AG04449 (cell line): ENCODE measurements at regions of chr10 and their contacts with region 1.

Region 1: GRCh38 chr10:11036407-11037011 is 18.8 kb downstream of the CELF2 start:
- DNase-seq: no peak
- H3K4me3 ChIP-seq: no peak overlapping the region
- CTCF ChIP-seq: peak; percentile 54

Region 2: GRCh38 chr10:9608602-9609001 is 1427.9 kb before region 1 on chr10:
- CTCF ChIA-PET with region 1: interaction called, 37 read pairs
- POLR2A ChIA-PET with region 1: no interaction called
- DNase-seq: no peak
- H3K4me3 ChIP-seq: no peak overlapping the region
- CTCF ChIP-seq: no peak

Region 3: GRCh38 chr10:11113156-11113555 is 76.6 kb after region 1 on chr10:
- CTCF ChIA-PET with region 1: no interaction called
- POLR2A ChIA-PET with region 1: no interaction called
- DNase-seq: no peak
- H3K4me3 ChIP-seq: no peak overlapping the region
- CTCF ChIP-seq: no peak